Panc1 (cell line): ENCODE measurements at regions of chr18 and their contacts with region 1.

Region 1: GRCh38 chr18:47748847-47749599 is 181.4 kb downstream of the SMAD2 start:
- DNase-seq: peak; percentile 24
- ATAC-seq: peak; percentile 92
- H3K4me3 ChIP-seq: no peak overlapping the region; a peak in 1 of 4 replicates
- H3K27ac ChIP-seq: no peak overlapping the region
- H3K4me1 ChIP-seq: no peaks in the 10 kb centered on the region
- H3K27me3 ChIP-seq: no peaks in the 10 kb centered on the region; the same call in 1 of the 2 replicates
- CTCF ChIP-seq: peak; percentile 97

Region 2: DNA sequence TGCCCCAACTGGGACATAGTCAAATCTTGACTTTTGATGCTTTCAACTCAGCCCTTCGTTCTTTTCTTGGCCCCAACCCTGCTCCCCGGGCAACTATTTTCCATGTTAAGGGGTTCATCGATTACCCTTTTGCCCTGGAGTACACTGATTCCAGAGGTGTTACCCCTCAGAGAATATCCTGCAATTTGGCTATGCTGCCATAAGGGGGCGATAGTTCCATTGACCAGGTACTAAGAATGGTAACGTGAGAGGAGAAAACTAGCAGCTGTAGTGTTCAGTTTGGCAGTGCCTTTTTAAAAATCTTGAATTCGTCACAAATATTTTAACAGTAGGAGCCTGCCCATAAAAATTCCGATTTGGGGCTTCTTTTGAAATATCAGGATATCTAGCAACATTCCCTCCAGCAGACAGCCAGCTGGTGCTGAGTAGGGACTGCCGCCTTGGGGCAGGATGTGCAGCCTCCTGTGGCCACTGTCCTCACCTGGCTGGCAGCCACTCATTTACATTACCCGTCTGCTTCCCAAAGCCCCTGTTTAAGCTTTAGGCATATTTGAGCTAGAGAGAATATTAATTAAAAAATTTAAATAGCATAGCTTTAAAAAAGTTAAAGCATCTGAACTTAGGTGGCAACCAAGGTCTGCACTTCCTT is 351.2 kb before region 1 on chr18:
- CTCF ChIA-PET with region 1: no interaction called
- POLR2A ChIA-PET with region 1: no interaction called
- in situ Hi-C with region 1: no loop called
- intact Hi-C with region 1: loop called (anchors 10 kb)
- DNase-seq: no peak
- ATAC-seq: no peak
- H3K4me3 ChIP-seq: no peak overlapping the region
- H3K27ac ChIP-seq: no peak overlapping the region
- H3K4me1 ChIP-seq: no peaks in the 10 kb centered on the region
- H3K27me3 ChIP-seq: no peaks in the 10 kb centered on the region
- CTCF ChIP-seq: peak; percentile 57

Region 3: DNA sequence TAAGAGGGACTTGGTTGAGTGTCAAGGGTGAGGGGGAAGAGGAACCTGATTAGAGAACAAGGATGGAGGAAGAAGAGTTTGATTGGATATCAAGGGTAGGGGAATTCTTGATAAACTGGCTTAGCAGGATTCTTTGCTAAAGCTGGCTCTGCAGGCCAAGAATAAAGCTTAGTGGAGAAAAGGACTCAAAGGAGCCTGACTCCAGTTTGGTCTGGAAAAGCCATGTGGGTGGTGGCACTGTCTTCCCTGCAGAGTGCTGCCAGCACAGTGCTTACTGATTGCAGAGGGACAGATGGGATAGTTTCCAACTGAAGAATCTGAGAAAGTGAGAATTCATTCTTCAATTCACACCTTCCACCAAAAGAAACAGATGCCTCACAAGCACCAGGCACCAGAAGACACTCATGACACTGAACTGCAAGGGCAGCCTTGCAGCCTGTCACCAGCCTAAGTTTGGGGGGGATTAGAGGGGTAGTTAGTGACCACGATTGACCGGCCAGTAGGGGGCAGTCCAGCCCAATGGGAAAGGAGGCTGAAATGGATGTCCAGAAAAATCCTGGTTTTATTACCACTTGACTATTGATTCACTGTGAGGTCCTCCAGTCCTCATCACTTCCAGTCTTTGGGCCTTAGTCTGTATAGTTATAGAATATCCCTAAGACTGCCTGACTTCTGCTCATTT is 153.1 kb before region 1 on chr18:
- CTCF ChIA-PET with region 1: no interaction called
- POLR2A ChIA-PET with region 1: no interaction called
- in situ Hi-C with region 1: no loop called
- intact Hi-C with region 1: loop called (anchors 5 kb)
- DNase-seq: peak; percentile 2
- ATAC-seq: no peak
- H3K4me3 ChIP-seq: no peak overlapping the region
- H3K27ac ChIP-seq: no peak overlapping the region
- H3K4me1 ChIP-seq: no peaks in the 10 kb centered on the region
- H3K27me3 ChIP-seq: peaks cover 5% of the 10 kb centered on the region; the same call in 1 of the 2 replicates
- CTCF ChIP-seq: peak; percentile 55